Psoas muscle (tissue), 8 donors: ENCODE measurements at regions of chr20 and their contacts with region 1.

Region 1: GRCh38 chr20:20211274-20211987 is 156.5 kb upstream of the INSM1 start:
- DNase-seq: no peak
- ATAC-seq: no peak
- H3K4me3 ChIP-seq: no peak overlapping the region
- H3K27ac ChIP-seq: peak overlapping the region; percentile 17
- H3K4me1 ChIP-seq: peaks cover 12% of the 10 kb centered on the region
- H3K27me3 ChIP-seq: no peaks in the 10 kb centered on the region
- CTCF ChIP-seq: no peak

Region 2: GRCh38 chr20:20083807-20084206 is 127.6 kb before region 1 on chr20:
- intact Hi-C with region 1: loop called in 1 of 2 experiments (anchors 5 kb)
- DNase-seq: no peak
- ATAC-seq: peak; percentile 18 to 43 (median 22)
- H3K4me3 ChIP-seq: peak overlapping the region; percentile 60
- H3K27ac ChIP-seq: peak overlapping the region; percentile 94
- H3K4me1 ChIP-seq: peaks cover 16% of the 10 kb centered on the region
- H3K27me3 ChIP-seq: no peaks in the 10 kb centered on the region
- CTCF ChIP-seq: peak; percentile 65

Region 3: GRCh38 chr20:20393207-20394120 is 182.0 kb after region 1 on chr20:
- intact Hi-C with region 1: no loop called
- DNase-seq: no peak
- ATAC-seq: peak in 2 of 4 donors; percentile 12 to 29
- H3K4me3 ChIP-seq: no peak overlapping the region
- H3K27ac ChIP-seq: no peak overlapping the region
- H3K4me1 ChIP-seq: no peaks in the 10 kb centered on the region
- H3K27me3 ChIP-seq: no peaks in the 10 kb centered on the region
- CTCF ChIP-seq: no peak

Region 4: GRCh38 chr20:20407891-20408805 is 196.7 kb after region 1 on chr20:
- intact Hi-C with region 1: no loop called
- DNase-seq: no peak
- ATAC-seq: peak in 2 of 4 donors; percentile 65 to 70
- H3K4me3 ChIP-seq: no peak overlapping the region
- H3K27ac ChIP-seq: no peak overlapping the region
- H3K4me1 ChIP-seq: no peaks in the 10 kb centered on the region
- H3K27me3 ChIP-seq: no peaks in the 10 kb centered on the region
- CTCF ChIP-seq: no peak